ENCODE measurements at regions of chr4 and their contacts with region 1.

Region 1: DNA sequence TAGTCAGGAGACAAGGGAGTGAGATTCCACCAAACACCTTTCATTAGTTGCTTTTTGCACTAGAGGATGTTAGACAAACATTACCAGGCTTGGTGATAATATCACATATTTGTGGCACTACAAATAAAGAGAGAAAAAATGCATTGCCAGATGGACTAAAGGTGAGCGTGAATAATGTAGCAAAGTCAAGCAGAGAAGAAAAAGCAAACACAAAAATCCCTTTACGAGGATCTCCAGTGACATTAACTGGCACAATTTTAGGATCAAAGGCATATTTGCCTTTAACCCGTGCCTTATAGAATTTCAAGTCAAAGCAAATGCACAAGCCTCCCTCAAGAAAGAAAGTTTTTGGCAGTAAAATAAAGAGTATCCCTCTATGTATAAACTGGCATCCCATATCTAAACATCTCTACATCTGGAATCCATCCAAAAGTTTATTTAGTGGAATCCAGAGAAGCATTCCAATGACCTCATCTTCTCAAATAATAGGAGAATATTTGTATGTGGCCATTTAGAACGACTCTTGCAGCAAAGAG is 290.8 kb downstream of the KCTD8 start:
- DNase-seq: peak in 1 of 2 experiments; percentile 34
- H3K4me3 ChIP-seq: no peak overlapping the region
- H3K4me3 Mint-ChIP-seq: peak overlapping the region; percentile 5
- H3K27ac Mint-ChIP-seq: peak overlapping the region; percentile 44
- H3K4me1 ChIP-seq: peaks cover 24% of the 10 kb centered on the region
- H3K4me1 Mint-ChIP-seq: peaks cover 27% of the 10 kb centered on the region
- H3K27me3 ChIP-seq: no peaks in the 10 kb centered on the region
- H3K27me3 Mint-ChIP-seq: no peaks in the 10 kb centered on the region
- CTCF ChIP-seq: no peak

Region 2: GRCh38 chr4:44118971-44119680 is 38.7 kb before region 1 on chr4:
- CTCF ChIA-PET with region 1: no interaction called
- POLR2A ChIA-PET with region 1: no interaction called
- intact Hi-C with region 1: loop called (anchors 2 kb)
- DNase-seq: peak in 1 of 2 experiments; percentile 13
- H3K4me3 ChIP-seq: no peak overlapping the region
- H3K4me3 Mint-ChIP-seq: no peak overlapping the region
- H3K27ac Mint-ChIP-seq: peak overlapping the region; percentile 22
- H3K4me1 ChIP-seq: peaks cover 15% of the 10 kb centered on the region
- H3K4me1 Mint-ChIP-seq: peaks cover 11% of the 10 kb centered on the region
- H3K27me3 ChIP-seq: no peaks in the 10 kb centered on the region
- H3K27me3 Mint-ChIP-seq: no peaks in the 10 kb centered on the region
- CTCF ChIP-seq: no peak

Region 3: DNA sequence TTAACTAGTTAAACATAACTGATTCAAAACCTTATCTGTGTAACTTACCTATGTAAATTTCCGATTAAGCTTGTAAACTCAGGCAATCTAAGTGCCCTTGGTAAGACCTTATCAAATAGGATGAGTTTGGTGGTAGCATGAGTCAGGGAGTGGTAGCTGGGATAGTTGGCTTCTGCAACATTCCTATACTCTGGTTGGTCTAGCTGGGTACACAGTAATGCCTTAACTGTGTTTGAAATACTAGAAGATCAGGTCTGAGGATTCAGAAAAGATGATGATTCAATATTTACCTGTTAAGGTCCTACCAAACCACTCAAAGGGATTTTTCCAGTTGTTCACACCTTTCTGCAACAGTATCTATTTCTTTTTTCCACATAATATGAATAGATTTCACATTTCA is 488.4 kb after region 1 on chr4:
- CTCF ChIA-PET with region 1: no interaction called
- POLR2A ChIA-PET with region 1: no interaction called
- intact Hi-C with region 1: no loop called
- DNase-seq: no peak
- H3K4me3 ChIP-seq: no peak overlapping the region
- H3K4me3 Mint-ChIP-seq: no peak overlapping the region
- H3K27ac Mint-ChIP-seq: no peak overlapping the region
- H3K4me1 ChIP-seq: no peaks in the 10 kb centered on the region
- H3K4me1 Mint-ChIP-seq: no peaks in the 10 kb centered on the region
- H3K27me3 ChIP-seq: no peaks in the 10 kb centered on the region
- H3K27me3 Mint-ChIP-seq: no peaks in the 10 kb centered on the region
- CTCF ChIP-seq: no peak

Region 4: GRCh38 chr4:44678094-44679041 is 520.6 kb after region 1 on chr4 and contains the start of gene GUF1:
- CTCF ChIA-PET with region 1: no interaction called
- POLR2A ChIA-PET with region 1: no interaction called
- intact Hi-C with region 1: no loop called
- DNase-seq: peak; percentile 85 to 86
- H3K4me3 ChIP-seq: peak within 1 kb of the TSS; percentile 69
- H3K4me3 Mint-ChIP-seq: peak within 1 kb of the TSS; percentile 95
- H3K27ac Mint-ChIP-seq: peak within 1 kb of the TSS; percentile 97
- H3K4me1 ChIP-seq: no peaks in the 10 kb centered on the region
- H3K4me1 Mint-ChIP-seq: no peaks in the 10 kb centered on the region
- H3K27me3 ChIP-seq: no peaks in the 10 kb centered on the region
- H3K27me3 Mint-ChIP-seq: no peaks in the 10 kb centered on the region
- CTCF ChIP-seq: no peak
- total RNA-seq, gene GUF1: 27.6 and 29.0 TPM in 2 replicates

Measured in Caco-2 (cell line).